AG04449 (cell line): ENCODE measurements at regions of chr4 and their contacts with region 1.

Region 1: GRCh38 chr4:150242820-150243458 is 164.7 kb downstream of the DCLK2 start:
- DNase-seq: no peak
- H3K4me3 ChIP-seq: no peak overlapping the region
- CTCF ChIP-seq: peak; percentile 78

Region 2: DNA sequence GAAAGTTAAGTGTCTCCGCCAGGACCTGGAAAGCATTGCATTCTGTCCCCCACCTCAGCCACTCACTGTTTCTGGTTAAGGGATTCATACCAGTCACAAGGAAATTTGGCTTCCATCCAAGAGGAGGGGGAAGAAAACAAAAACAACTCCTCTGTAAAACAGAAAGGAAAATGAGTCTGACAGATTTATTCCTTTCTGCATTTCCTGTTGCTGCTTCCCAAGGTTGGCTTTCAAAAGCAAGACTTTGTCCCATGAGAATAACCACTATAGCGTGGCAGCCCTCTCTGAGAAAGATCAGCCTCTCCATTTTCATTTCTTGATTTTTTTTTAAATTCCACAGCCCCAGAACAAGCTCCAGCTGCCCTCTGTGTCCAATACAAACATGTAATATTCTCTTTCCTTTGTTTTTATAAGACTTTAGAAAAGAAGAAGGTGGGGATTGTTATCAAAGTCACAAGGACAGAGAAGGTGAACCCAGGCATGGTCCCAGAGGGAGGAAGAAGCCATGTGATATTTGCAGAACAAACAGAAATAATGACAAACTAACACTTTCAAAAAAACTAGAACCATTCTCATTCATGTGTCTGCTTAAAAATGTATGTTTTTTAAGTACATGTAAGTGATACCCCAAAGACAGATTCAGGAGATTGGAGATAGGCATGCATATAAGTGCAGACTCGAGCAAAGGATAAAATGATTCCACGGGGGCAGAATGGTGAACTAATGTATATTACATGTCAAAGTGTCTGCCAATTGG is 255.4 kb before region 1 on chr4:
- CTCF ChIA-PET with region 1: interaction called, 30 read pairs
- POLR2A ChIA-PET with region 1: no interaction called
- DNase-seq: no peak
- H3K4me3 ChIP-seq: no peak overlapping the region
- CTCF ChIP-seq: no peak

Region 3: GRCh38 chr4:150010525-150011126 is 232.3 kb before region 1 on chr4:
- CTCF ChIA-PET with region 1: interaction called, 136 read pairs
- POLR2A ChIA-PET with region 1: no interaction called
- DNase-seq: no peak
- H3K4me3 ChIP-seq: no peak overlapping the region
- CTCF ChIP-seq: peak; percentile 41

Region 4: DNA sequence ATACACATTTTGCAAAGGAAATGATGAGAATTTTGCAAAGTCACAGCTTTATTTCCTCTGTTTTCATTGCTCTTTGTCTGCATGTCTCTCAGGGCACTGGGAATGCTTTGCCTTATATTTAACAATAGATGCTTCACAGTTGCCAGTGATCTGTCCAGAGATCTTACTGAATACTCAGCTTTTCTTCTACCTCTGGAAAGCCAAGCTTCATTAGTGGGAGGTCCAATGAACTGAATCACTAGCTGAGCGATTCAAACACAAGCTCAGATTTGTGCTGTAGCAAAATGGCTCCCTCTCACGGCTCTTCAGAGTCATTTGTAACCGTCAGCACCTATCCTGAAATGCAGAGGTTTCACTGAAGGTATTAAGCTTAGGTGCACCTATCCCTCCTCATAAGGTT is 25.7 kb before region 1 on chr4:
- CTCF ChIA-PET with region 1: interaction called, 23 read pairs
- POLR2A ChIA-PET with region 1: interaction called, 4 read pairs
- DNase-seq: no peak
- H3K4me3 ChIP-seq: no peak overlapping the region
- CTCF ChIP-seq: peak; percentile 49

Region 5: GRCh38 chr4:150256841-150257730 is 14.1 kb after region 1 on chr4:
- CTCF ChIA-PET with region 1: interaction called, 36 read pairs
- POLR2A ChIA-PET with region 1: no interaction called
- DNase-seq: no peak
- H3K4me3 ChIP-seq: no peak overlapping the region
- CTCF ChIP-seq: no peak